ENCODE measurements at regions of chr17 and their contacts with region 1.

Region 1: GRCh38 chr17:39209317-39210092 is 9.4 kb downstream of the RPL19 start:
- DNase-seq: peak; percentile 45
- ATAC-seq: peak; percentile 37
- H3K4me3 Mint-ChIP-seq: peak overlapping the region; percentile 61
- H3K27ac Mint-ChIP-seq: no peak overlapping the region
- H3K4me1 Mint-ChIP-seq: peaks cover 36% of the 10 kb centered on the region
- H3K27me3 Mint-ChIP-seq: peaks cover 13% of the 10 kb centered on the region
- CTCF ChIP-seq: no peak

Region 2: DNA sequence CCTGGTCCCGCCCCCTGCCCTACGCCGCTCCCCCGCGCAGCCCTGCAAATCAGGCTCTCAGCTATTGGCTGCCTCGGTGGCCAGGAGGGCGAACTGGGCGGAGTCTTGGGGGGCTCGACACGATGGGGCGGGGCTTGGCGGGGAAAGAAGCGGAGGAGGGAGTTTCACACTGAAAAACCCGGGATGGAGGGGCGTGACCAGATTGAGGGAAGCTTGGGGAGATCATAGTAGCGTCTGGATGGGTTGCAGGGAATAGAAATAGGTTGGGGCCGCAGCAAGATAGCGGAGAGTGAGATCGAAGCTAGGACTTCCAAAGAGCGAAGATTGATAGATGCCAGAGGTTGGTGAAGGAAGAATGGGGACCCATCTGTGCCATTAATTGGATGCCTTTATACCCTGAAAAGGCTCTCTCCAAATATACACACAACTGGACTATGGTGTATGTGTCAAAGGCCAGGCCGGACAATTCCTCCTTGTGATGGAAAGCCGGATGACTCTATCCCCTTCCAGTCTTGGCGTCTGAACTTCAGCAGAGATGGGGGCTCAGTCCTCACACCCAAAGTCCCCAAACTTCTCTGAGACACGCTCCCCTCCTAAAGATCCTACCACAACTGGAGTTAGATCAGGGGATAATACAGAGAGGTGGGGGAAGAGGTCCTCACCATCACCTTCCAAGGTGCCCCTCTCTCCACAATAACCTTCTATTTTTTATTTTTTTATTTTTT is 16.6 kb after region 1 on chr17:
- CTCF ChIA-PET with region 1: interaction called, 151 read pairs
- POLR2A ChIA-PET with region 1: interaction called, 11 read pairs
- intact Hi-C with region 1: loop called (anchors 2 kb)
- DNase-seq: no peak
- ATAC-seq: peak; percentile 63
- H3K4me3 Mint-ChIP-seq: peak overlapping the region; percentile 78
- H3K27ac Mint-ChIP-seq: peak overlapping the region; percentile 7
- H3K4me1 Mint-ChIP-seq: peaks cover 12% of the 10 kb centered on the region
- H3K27me3 Mint-ChIP-seq: peaks cover 39% of the 10 kb centered on the region
- CTCF ChIP-seq: no peak

Region 3: GRCh38 chr17:39235555-39236449 is 26.3 kb after region 1 on chr17:
- CTCF ChIA-PET with region 1: interaction called, 151 read pairs
- POLR2A ChIA-PET with region 1: interaction called, 11 read pairs
- intact Hi-C with region 1: loop called (anchors 1 kb)
- DNase-seq: no peak
- ATAC-seq: peak; percentile 27
- H3K4me3 Mint-ChIP-seq: no peak overlapping the region
- H3K27ac Mint-ChIP-seq: no peak overlapping the region
- H3K4me1 Mint-ChIP-seq: peaks cover 27% of the 10 kb centered on the region
- H3K27me3 Mint-ChIP-seq: peaks cover 15% of the 10 kb centered on the region
- CTCF ChIP-seq: no peak

Region 4: DNA sequence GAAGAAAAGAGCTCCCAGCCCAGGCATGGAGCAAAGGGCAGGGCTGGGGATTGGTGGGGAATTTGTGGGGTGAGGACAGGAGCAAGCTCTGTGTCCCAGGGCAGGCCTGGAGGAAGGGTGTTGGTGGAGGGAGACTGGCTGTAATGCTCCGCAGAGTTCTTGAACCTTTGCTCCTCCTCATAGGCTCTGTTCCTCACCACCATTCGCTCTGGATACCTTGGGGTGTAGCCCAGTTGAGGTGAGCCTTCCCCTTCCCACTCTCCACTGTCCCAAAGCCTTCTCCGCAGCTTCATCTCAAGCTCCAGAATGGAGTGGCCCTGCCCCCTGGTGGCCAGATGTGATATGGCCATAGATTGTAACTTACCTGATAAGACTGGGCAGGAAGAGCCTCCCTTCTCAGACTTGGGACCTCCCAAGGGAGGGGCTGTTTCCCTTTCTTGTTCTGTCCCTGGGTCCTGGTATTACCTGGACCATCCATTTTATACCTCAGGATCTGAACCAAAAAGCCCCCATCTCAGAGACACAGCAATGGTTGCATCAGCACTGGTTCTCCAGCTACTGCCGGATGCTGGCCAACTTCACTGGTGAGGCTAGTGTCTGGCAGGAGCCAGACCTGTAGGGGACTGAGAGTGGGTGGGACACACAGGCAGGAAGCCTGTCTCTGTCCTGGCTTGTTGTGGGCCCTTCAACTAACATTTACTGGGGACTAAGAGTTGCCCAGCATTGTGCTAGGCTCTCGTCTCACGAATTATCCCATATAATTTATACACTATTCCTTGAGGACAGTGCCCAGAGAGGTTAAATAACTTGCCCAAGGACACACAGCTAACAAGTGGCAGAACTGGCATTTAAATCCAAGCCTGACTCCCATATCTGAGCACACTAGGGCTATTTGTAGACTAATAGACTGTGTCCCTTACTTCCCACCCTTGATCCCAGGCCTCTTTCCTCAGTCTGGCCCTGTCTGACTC is 35.4 kb after region 1 on chr17:
- CTCF ChIA-PET with region 1: interaction called, 177 read pairs
- POLR2A ChIA-PET with region 1: interaction called, 59 read pairs
- intact Hi-C with region 1: loop called (anchors 1 kb)
- DNase-seq: peak; percentile 76
- ATAC-seq: peak; percentile 81
- H3K4me3 Mint-ChIP-seq: peak overlapping the region; percentile 56
- H3K27ac Mint-ChIP-seq: no peak overlapping the region
- H3K4me1 Mint-ChIP-seq: peaks cover 20% of the 10 kb centered on the region
- H3K27me3 Mint-ChIP-seq: peaks cover 3% of the 10 kb centered on the region
- CTCF ChIP-seq: peak; percentile 34

Region 5: GRCh38 chr17:39281806-39282205 is 72.3 kb after region 1 on chr17:
- CTCF ChIA-PET with region 1: no interaction called
- POLR2A ChIA-PET with region 1: no interaction called
- intact Hi-C with region 1: no loop called
- DNase-seq: no peak
- ATAC-seq: no peak
- H3K4me3 Mint-ChIP-seq: no peak overlapping the region
- H3K27ac Mint-ChIP-seq: no peak overlapping the region
- H3K4me1 Mint-ChIP-seq: peaks cover 10% of the 10 kb centered on the region
- H3K27me3 Mint-ChIP-seq: no peaks in the 10 kb centered on the region
- CTCF ChIP-seq: no peak